ENCODE measurements at regions of chrX and their contacts with region 1.

Region 1: GRCh38 chrX:30141966-30142365 is 73.4 kb upstream of the MAGEB2 start:
- DNase-seq: peak; percentile 10
- H3K4me3 Mint-ChIP-seq: no peak overlapping the region
- H3K27ac Mint-ChIP-seq: no peak overlapping the region
- H3K4me1 Mint-ChIP-seq: no peaks in the 10 kb centered on the region
- H3K27me3 Mint-ChIP-seq: no peaks in the 10 kb centered on the region
- CTCF ChIP-seq: no peak

Region 2: GRCh38 chrX:30196322-30196721 is 54.4 kb after region 1 on chrX:
- CTCF ChIA-PET with region 1: no interaction called
- intact Hi-C with region 1: loop called (anchors 5 kb)
- DNase-seq: no peak
- H3K4me3 Mint-ChIP-seq: no peak overlapping the region
- H3K27ac Mint-ChIP-seq: no peak overlapping the region
- H3K4me1 Mint-ChIP-seq: no peaks in the 10 kb centered on the region
- H3K27me3 Mint-ChIP-seq: no peaks in the 10 kb centered on the region
- CTCF ChIP-seq: no peak

Region 3: DNA sequence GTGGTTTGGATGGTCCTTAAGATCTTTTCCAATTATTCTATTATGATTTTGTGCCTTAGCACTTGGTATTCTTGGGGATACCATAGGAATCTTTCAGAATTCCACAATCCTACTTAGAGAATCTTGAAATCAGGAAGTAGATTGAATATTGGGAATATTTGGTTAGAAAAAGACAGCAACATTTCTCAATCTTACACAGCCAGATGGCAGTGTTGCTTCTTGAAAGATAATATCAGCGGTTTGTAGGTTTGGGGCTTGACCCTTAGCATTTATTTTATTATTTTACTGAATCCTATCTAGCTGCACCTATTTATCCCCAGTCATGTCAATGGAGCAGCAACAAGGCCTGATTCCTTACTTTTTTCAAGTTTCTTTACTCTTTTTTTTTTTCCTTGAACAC is 133.5 kb after region 1 on chrX:
- CTCF ChIA-PET with region 1: no interaction called
- intact Hi-C with region 1: loop called (anchors 10 kb)
- DNase-seq: no peak
- H3K4me3 Mint-ChIP-seq: no peak overlapping the region
- H3K27ac Mint-ChIP-seq: no peak overlapping the region
- H3K4me1 Mint-ChIP-seq: peaks cover 11% of the 10 kb centered on the region
- H3K27me3 Mint-ChIP-seq: no peaks in the 10 kb centered on the region
- CTCF ChIP-seq: no peak

Region 4: GRCh38 chrX:30488092-30488491 is 346.1 kb after region 1 on chrX:
- CTCF ChIA-PET with region 1: no interaction called
- intact Hi-C with region 1: loop called (anchors 5 kb)
- DNase-seq: peak; percentile 6
- H3K4me3 Mint-ChIP-seq: no peak overlapping the region
- H3K27ac Mint-ChIP-seq: no peak overlapping the region
- H3K4me1 Mint-ChIP-seq: no peaks in the 10 kb centered on the region
- H3K27me3 Mint-ChIP-seq: no peaks in the 10 kb centered on the region
- CTCF ChIP-seq: no peak

Region 5: DNA sequence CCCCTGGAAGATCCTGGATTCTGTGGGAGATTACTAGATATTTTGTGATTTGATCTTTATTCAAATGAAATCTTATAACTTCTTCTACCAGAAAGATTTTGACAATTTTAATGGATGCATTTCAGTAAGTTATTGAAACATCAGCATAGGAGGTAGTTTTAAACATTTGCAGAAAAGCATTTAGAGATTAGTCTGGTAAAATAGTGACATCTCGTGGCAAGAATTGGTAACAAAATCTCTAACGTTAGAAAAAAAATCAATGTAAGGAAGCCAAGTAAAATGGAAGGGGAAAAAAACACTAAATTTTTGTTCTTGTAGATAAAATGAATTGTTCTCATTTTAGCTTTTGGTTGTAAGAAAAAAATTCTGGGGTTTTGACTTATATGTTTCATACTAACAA is 362.3 kb after region 1 on chrX:
- CTCF ChIA-PET with region 1: no interaction called
- intact Hi-C with region 1: loop called (anchors 1 kb)
- DNase-seq: no peak
- H3K4me3 Mint-ChIP-seq: no peak overlapping the region
- H3K27ac Mint-ChIP-seq: no peak overlapping the region
- H3K4me1 Mint-ChIP-seq: no peaks in the 10 kb centered on the region
- H3K27me3 Mint-ChIP-seq: no peaks in the 10 kb centered on the region
- CTCF ChIP-seq: no peak

Measured in Calu3 (cell line).